ENCODE measurements at regions of chr7 and their contacts with region 1.

Region 1: GRCh38 chr7:67625257-67625737 is 628.7 kb downstream of the TYW1 start:
- DNase-seq: no peak
- ATAC-seq: peak; percentile 81
- H3K4me3 ChIP-seq: no peak overlapping the region
- H3K27ac ChIP-seq: no peak overlapping the region
- H3K4me1 ChIP-seq: no peaks in the 10 kb centered on the region
- H3K27me3 ChIP-seq: no peaks in the 10 kb centered on the region
- CTCF ChIP-seq: peak; percentile 71 to 81 (median 72)
- EP300 ChIP-seq: no peak
- POLR2A ChIP-seq: no peak
- RAD21 ChIP-seq: peak; percentile 79

Region 2: DNA sequence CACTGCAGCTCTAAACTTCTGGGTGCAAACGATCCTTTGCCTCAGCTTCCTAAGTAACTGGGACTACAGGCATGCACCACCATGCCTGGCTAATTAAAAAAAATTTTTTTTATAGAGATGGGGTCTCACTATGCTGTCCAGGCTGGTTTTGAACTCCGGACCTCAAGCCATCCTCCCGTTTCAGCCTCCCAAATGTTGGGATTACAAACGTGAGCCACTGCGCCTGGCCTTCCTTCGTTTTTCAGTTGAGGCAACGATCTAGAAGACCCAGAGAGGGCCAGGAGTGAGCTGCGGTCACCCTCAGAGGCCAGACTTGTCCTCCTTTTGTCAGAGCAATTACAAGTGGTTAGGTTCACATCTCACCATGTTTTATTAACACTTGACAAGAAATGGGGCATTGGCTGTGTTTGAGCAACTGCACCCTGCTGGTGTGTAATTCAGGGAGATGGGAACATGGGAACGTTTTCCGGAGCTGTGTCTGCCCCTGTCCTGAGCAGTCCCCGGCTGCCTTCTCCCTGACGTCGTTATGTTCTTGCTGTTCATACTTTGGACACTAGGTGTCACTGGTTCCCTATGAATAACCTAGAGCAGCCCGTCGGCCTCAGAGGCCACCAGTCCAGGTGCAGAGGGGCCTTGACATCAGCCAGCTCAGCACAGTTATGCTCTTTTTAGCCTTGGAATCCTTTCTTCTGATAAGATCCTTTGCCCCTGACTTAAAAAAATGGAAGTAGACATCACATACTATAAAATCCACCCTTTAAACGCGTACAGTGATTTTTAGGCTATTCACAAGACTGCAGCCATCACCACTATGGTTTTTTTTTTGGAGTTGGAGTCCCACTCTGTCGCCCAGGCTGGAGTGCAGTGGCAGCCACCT is 253.6 kb before region 1 on chr7:
- CTCF ChIA-PET with region 1: interaction called, 4 read pairs
- POLR2A ChIA-PET with region 1: no interaction called
- RAD21 ChIA-PET with region 1: interaction called, 3 read pairs
- SMC1A ChIA-PET with region 1: no interaction called
- in situ Hi-C with region 1: no loop called
- intact Hi-C with region 1: loop called (anchors 10 kb)
- DNase-seq: peak; percentile 21
- ATAC-seq: peak; percentile 99
- H3K4me3 ChIP-seq: no peak overlapping the region
- H3K27ac ChIP-seq: no peak overlapping the region
- H3K4me1 ChIP-seq: no peaks in the 10 kb centered on the region
- H3K27me3 ChIP-seq: no peaks in the 10 kb centered on the region
- CTCF ChIP-seq: peak; percentile 76 to 85 (median 84)
- EP300 ChIP-seq: no peak
- POLR2A ChIP-seq: no peak
- RAD21 ChIP-seq: peak; percentile 87

Region 3: GRCh38 chr7:67614843-67615242 is 10.5 kb before region 1 on chr7:
- CTCF ChIA-PET with region 1: interaction called, 12 read pairs
- POLR2A ChIA-PET with region 1: no interaction called
- RAD21 ChIA-PET with region 1: no interaction called
- SMC1A ChIA-PET with region 1: interaction called, 3 read pairs
- in situ Hi-C with region 1: no loop called
- intact Hi-C with region 1: no loop called
- DNase-seq: no peak
- ATAC-seq: no peak
- H3K4me3 ChIP-seq: no peak overlapping the region
- H3K27ac ChIP-seq: no peak overlapping the region
- H3K4me1 ChIP-seq: no peaks in the 10 kb centered on the region
- H3K27me3 ChIP-seq: no peaks in the 10 kb centered on the region
- CTCF ChIP-seq: no peak
- EP300 ChIP-seq: no peak
- POLR2A ChIP-seq: no peak
- RAD21 ChIP-seq: no peak